AG04449 (cell line): ENCODE measurements at regions of chr5 and their contacts with region 1.

Region 1: GRCh38 chr5:126801992-126802294 is 25.0 kb downstream of the LMNB1 start:
- DNase-seq: no peak
- H3K4me3 ChIP-seq: no peak overlapping the region
- CTCF ChIP-seq: peak; percentile 28

Region 2: DNA sequence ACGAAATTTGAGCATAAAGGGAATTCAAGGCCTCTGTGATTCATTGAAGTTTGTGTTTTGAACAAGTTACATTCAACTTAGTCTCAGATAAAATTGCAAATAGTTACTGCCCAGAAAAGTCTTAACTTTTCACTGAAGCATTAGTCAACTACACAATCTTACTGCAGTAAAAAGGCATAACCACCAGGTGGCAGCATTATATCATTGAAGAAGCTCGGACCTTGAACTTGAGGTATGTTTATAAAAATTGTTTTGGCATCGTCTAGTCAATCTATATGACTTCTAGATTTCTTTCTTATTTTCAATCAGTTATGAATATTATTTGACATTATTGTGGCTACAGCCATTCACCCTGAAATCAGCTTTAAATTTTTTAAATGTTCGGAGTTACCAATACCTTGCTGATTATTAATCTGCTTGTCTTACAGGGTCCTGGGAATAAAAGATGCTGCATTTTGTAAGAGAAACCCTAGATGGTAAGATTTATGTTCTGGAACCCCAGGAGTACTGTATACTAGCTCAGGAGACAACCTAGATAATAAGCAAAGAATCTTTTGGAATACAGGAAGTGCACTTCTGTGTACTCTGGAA is 462.6 kb before region 1 on chr5:
- CTCF ChIA-PET with region 1: interaction called, 12 read pairs
- POLR2A ChIA-PET with region 1: no interaction called
- DNase-seq: peak; percentile 41
- H3K4me3 ChIP-seq: no peak overlapping the region
- CTCF ChIP-seq: peak; percentile 46

Region 3: DNA sequence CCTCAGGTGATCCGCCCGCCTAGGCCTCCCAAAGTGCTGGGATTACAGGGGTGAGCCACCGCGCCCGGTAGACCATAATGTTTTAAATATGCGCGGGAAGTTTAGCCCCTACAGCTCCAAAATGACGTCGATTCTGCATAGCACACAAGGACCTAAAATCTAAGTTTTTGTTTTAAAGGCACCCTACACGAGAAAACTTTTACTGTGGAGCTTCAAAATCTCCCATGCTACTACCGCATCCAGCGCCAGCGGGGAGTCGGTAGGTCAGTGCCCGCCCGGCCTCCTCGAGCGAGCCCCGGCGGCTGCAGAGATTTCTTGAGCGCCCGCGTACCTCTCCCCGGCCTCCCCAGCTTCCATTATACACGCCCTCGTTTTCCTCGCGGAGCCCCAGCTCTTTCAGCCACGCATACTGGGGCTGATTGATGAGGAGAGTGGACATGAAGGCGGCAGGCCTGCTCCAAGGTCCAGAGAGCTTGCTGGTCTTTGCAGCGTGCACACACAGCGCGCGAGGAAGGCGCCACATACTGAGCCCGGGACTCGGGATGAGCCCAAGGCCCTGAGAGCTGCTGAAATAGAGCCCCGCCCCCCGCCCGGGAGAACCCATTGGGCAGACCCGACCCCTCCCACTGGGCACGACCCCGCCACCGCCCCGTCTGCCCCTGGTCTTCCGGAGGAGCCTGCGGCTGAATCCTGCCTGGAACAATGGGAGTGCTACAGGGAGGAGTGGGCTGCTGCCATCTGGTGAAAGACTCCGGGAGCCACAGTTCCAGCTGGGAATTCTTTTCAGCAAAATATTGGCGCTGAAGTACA is 207.1 kb before region 1 on chr5 and contains the start of gene ALDH7A1:
- CTCF ChIA-PET with region 1: interaction called, 16 read pairs
- POLR2A ChIA-PET with region 1: no interaction called
- DNase-seq: peak; percentile 44
- H3K4me3 ChIP-seq: peak within 1 kb of the TSS; percentile 76
- CTCF ChIP-seq: peak; percentile 71

Region 4: GRCh38 chr5:126600631-126601511 is 201.1 kb before region 1 on chr5 and contains the start of gene PHAX:
- CTCF ChIA-PET with region 1: interaction called, 16 read pairs
- POLR2A ChIA-PET with region 1: no interaction called
- DNase-seq: no peak
- H3K4me3 ChIP-seq: peak within 1 kb of the TSS; percentile 96
- CTCF ChIP-seq: peak; percentile 76

Region 5: DNA sequence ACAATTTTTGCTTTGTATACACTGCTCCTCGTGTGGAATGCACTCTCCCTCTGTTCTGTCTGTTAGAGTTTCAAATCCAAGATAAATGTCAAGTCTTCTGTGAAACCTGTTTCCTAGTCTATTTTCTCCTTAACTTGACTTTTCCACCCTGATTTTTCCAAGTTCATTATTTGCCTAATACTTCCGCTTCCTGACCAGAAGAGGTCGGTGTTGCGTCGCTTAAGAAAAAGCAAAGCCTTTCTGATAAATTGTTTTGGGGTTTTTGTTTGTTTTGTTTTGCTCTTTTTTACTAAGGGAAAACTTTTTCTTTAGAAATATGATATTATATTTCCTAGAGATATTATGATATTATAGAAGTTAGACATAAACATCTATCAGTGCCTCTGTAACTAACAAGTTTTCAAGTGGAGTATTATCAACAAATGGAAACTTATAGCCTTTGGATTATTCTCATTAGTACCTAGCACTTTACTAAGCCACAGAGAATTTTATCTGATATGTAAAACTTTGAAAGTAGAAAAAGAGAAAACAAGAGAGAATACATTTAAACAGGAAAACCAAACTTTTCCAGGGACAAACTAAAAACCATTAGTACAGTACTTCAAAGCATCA is 145.4 kb before region 1 on chr5:
- CTCF ChIA-PET with region 1: interaction called, 209 read pairs
- POLR2A ChIA-PET with region 1: no interaction called
- DNase-seq: no peak
- H3K4me3 ChIP-seq: no peak overlapping the region
- CTCF ChIP-seq: peak; percentile 66

Region 6: DNA sequence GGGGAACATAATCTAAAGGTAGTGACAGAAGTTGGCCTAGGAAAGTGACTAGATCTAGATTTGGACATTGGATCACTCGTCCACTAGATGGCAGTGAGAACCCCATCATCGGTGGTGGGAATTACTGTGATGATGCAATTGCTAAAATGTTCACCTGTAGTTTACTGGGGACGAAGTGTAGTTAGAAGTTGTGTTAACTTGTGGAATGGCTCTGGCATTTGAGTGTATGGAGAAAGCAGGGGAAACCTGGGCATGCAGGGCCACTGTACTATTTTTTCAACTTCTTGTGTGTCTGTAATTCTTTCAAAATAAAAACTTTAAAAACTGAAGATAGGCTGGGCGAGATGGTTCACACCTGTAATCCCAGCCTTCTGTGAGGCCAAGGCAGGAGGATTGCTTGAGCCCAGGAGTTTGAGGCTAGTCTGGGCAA is 125.7 kb before region 1 on chr5:
- CTCF ChIA-PET with region 1: interaction called, 262 read pairs
- POLR2A ChIA-PET with region 1: no interaction called
- DNase-seq: no peak
- H3K4me3 ChIP-seq: no peak overlapping the region
- CTCF ChIP-seq: peak; percentile 67

Region 7: GRCh38 chr5:126814721-126815404 is 12.9 kb after region 1 on chr5:
- CTCF ChIA-PET with region 1: interaction called, 29 read pairs
- POLR2A ChIA-PET with region 1: no interaction called
- DNase-seq: no peak
- H3K4me3 ChIP-seq: no peak overlapping the region
- CTCF ChIP-seq: no peak

Region 8: DNA sequence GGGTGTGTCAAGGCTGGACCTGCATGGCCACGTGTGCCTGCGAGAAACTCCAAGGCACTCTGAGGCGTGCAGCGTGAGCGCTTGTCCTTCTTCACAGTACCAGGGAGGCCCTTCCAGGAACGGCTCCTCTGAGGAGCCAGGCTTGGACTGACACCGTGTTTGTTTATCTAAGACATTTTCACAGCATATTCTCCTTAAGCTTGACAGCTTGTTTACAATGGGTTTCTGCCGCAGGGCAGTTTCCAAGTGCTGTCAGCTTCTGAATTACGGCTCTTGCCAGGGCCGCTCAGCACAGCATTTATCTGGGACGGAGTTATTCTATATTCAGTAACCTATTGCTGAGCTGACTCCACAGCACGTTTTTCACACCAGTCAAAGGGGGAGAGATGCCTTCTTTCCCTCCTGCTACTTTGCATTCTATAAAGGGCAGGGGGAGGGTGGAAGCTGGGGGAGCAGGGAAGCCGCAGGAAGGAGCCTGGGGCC is 73.4 kb after region 1 on chr5:
- CTCF ChIA-PET with region 1: no interaction called
- POLR2A ChIA-PET with region 1: no interaction called
- DNase-seq: no peak
- H3K4me3 ChIP-seq: no peak overlapping the region
- CTCF ChIP-seq: no peak